Activated T-helper 1 cell treated with anti-CD3 and anti-CD28 coated beads, Interleukin-12 subunit alpha, Interleukin-12 subunit beta, Interleukin-2, Interleukin-4 antibody, amounts not matched to agents 30 ng/mL and 10 ng/mL and 1 ng/mL, durations not matched to agents 14 hours and 24 hours and 36 hours (primary cell): ENCODE measurements at regions of chr1 and their contacts with region 1.

Region 1: GRCh38 chr1:173297798-173298391 is 90.8 kb upstream of the TNFSF4 start:
- DNase-seq: peak; percentile 15
- H3K4me3 Mint-ChIP-seq: peak overlapping the region; percentile 16
- H3K27ac Mint-ChIP-seq: peak overlapping the region; percentile 37
- H3K4me1 Mint-ChIP-seq: peaks cover 24% of the 10 kb centered on the region
- H3K27me3 Mint-ChIP-seq: peaks cover 8% of the 10 kb centered on the region

Region 2: DNA sequence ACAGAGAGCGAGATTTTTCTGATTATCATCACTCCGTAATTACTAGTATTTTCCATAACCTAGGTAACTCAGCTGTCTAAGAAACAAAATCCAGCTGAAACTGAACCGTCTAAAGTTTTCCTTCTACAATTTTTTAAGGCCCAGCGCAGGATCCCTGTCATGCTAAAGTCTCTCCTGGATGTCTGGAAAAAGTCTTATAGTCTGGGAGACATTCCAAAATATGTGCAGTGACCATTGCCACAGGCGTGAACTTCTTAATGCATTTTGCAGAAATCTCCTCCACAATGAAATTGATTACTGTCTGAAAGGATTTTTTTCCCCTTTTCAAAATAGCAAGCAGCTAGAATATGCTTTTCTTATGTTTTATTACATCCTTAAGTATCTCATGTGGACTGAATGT is 1086.7 kb before region 1 on chr1:
- intact Hi-C with region 1: no loop called
- DNase-seq: no peak
- H3K4me3 Mint-ChIP-seq: no peak overlapping the region
- H3K27ac Mint-ChIP-seq: no peak overlapping the region
- H3K4me1 Mint-ChIP-seq: peaks cover 9% of the 10 kb centered on the region
- H3K27me3 Mint-ChIP-seq: no peaks in the 10 kb centered on the region

Region 3: DNA sequence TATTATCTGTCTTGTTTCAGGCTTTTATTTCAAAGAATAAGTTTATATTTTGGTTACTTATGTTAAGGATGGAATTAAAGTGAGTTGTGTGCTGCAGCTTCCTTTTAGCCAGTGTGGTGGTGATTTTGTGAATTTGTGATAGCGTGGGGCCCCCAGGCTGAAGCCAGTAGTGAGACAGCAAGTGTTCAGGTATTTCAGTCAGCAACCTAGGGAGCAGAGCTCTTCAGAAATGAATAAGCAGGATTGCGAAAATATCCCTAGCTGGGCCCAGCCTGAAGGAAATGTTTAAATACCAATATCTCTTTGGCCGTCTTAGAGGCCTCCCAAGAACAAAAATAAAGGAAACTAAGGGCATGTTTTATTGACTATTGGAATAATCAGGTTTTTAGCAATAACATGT is 1028.3 kb before region 1 on chr1:
- intact Hi-C with region 1: loop called (anchors 5 kb)
- DNase-seq: no peak
- H3K4me3 Mint-ChIP-seq: peak overlapping the region; percentile 43
- H3K27ac Mint-ChIP-seq: peak overlapping the region; percentile 82
- H3K4me1 Mint-ChIP-seq: peaks cover 64% of the 10 kb centered on the region
- H3K27me3 Mint-ChIP-seq: no peaks in the 10 kb centered on the region

Region 4: GRCh38 chr1:172671591-172671990 is 626.3 kb before region 1 on chr1:
- intact Hi-C with region 1: loop called (anchors 10 kb)
- DNase-seq: no peak
- H3K4me3 Mint-ChIP-seq: no peak overlapping the region
- H3K27ac Mint-ChIP-seq: peak overlapping the region; percentile 63
- H3K4me1 Mint-ChIP-seq: peaks cover 92% of the 10 kb centered on the region
- H3K27me3 Mint-ChIP-seq: no peaks in the 10 kb centered on the region

Region 5: DNA sequence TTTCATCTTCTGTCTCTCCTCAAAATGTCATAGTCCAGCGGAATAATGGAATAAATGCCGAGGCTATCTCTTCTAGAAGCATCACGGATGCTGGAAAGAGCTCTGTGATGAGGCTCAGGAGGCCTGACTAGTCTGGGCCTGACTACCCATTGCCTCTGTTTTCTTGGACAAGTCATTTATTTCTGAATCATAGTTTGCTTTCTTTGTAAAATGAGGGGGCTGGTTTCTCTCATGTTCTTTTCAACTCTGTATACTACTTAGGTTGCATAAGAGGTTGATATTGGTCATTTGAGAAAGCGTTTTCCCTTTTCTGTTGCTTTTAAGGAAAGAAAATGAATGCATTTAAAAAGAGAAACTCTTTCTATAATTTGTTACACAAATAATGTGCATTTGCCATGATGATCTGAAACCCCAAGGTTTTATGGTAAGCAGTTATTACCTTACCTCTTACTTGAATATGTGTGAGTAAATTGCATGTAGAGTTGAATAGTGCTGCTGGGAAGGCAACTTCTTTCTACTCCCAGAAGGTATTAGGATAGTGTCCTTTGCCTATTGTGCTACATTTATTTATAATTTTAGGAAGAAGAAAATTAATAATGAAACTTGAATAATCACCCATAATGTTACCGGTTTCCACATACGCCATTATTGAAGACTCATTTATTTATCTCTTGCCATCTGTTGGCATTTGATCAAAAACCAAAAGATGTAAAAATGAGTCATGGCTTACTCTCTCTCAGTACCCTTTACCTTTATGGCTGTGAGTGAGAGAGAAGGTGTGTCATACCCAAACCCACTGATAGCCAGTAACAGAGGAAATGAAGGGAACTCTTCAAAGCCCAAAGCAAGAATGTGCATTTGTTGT is 459.8 kb before region 1 on chr1:
- intact Hi-C with region 1: loop called (anchors 1 kb)
- DNase-seq: peak; percentile 29
- H3K4me3 Mint-ChIP-seq: no peak overlapping the region
- H3K27ac Mint-ChIP-seq: peak overlapping the region; percentile 26
- H3K4me1 Mint-ChIP-seq: peaks cover 46% of the 10 kb centered on the region
- H3K27me3 Mint-ChIP-seq: peaks cover 65% of the 10 kb centered on the region

Region 6: DNA sequence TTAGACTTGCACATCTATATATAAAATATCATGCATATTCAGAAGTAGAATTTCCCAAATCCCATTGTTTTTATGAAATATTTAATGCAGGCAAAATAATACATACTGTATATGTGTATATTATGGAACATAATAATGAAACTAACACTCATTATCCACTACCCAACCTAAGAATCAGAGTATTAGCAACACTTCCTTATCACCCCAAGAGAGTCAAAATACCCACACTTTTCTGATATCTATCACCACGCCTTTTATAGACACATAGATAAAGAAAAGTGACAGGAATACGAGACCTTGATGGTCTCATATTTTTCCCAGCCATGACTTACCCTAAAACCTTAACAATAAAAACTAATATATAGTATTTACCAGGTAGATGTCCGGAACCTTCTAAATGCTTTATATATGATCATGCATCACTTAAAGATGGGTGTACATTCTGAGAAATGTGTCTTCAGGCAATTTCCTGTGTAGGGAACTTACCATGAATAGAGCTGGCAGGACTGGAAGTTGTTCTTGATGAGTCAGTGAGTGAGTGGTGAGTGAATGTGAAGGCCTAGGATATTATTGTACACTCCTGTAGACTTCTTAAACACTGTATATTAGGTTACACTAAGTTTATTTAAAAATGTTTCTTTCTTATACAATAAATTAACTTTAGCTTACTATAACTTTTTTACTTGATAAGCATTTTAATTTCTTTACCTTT is 136.2 kb before region 1 on chr1:
- intact Hi-C with region 1: no loop called
- DNase-seq: no peak
- H3K4me3 Mint-ChIP-seq: no peak overlapping the region
- H3K27ac Mint-ChIP-seq: no peak overlapping the region
- H3K4me1 Mint-ChIP-seq: no peaks in the 10 kb centered on the region
- H3K27me3 Mint-ChIP-seq: peaks cover 1% of the 10 kb centered on the region

Region 7: DNA sequence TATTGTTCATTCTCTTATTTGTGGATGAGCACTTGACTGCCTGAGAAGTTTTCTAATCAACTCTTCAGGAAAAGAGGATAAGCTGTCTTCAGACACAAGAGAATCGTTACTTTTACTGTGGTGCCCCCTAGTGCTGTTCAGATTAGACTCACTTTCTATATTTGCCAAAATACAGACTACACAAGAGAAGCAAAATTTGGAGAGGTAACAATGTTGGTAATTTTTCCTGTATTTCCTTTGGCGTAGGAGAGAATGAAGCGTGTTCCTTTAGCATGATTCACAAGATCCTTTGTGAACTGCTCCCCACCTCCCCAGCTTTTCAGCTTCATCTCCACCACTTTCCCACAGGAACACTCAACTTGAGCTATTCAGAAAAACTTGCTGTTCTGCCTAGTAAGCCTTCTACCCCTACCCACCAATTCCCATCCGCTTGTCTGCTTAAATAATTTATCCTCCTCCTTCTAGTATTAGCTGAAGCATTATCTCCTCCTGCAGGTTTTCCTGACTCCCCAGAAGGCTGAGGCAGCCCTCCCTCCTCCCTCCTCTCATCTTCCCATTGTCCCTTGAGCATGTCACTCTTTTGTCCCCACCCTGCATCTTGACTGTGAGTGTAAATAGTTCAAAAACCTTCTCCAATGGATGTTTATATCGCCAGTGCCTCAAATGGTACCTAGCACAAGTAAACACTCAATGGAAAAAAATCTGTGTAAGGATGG is 95.3 kb before region 1 on chr1:
- intact Hi-C with region 1: loop called (anchors 1 kb)
- DNase-seq: no peak
- H3K4me3 Mint-ChIP-seq: no peak overlapping the region
- H3K27ac Mint-ChIP-seq: no peak overlapping the region
- H3K4me1 Mint-ChIP-seq: peaks cover 47% of the 10 kb centered on the region
- H3K27me3 Mint-ChIP-seq: peaks cover 16% of the 10 kb centered on the region

Region 8: DNA sequence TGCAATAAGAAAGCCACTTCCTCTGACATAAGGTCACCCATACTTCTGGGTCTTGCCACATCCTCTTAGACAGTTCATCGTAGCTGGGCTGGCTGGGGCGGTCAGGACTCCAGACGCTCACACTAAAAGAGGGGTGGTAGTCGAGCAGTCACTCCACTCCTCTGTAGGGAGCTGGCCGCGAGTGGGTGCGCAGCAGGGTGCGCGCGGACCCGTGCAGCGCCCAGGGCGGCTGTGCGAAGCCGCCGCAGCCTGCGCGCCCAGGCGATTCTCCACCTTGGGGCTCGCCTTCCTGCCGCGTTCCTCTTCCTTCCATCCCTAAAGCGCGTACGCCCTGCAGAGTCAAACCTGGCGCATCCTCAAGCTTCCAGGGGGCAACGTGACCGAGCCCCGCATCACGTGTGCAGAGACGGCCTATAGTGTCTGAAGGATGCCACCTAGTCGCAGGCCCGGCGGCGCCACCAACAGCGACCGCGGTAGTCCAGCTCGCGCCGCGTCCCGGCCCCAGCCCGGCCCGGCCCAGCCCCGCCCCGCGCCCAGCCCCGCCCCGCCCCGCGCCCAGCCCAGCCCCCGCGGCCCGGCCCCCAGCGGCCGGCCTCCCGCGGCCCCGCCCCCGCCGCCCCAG is 178.9 kb after region 1 on chr1:
- intact Hi-C with region 1: loop called (anchors 5 kb)
- DNase-seq: peak; percentile 74
- H3K4me3 Mint-ChIP-seq: peak overlapping the region; percentile 92
- H3K27ac Mint-ChIP-seq: peak overlapping the region; percentile 93
- H3K4me1 Mint-ChIP-seq: peaks cover 65% of the 10 kb centered on the region
- H3K27me3 Mint-ChIP-seq: no peaks in the 10 kb centered on the region